ENCODE measurements at regions of chr17 and their contacts with region 1.

Region 1: DNA sequence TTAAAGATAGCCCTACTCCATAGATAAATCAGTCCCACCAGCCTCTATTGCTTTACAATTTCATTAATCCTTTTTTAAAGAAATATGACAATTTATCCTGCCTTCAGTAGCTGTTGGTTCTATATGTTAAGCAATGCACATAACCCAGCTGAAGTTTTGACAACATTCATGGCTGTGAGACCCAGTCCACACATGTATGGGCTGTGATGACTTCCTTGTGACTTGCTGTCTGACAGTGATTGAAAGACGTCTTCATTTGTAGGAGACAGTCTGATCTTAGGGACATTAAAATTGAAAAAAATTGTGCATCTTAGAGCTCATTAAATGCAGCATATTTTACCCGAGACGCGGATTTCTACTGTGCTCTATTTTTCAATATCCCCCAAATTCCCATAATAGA is 252.0 kb upstream of the ASIC2 start:
- DNase-seq: no peak
- H3K4me3 ChIP-seq: no peak overlapping the region
- CTCF ChIP-seq: no peak

Region 2: DNA sequence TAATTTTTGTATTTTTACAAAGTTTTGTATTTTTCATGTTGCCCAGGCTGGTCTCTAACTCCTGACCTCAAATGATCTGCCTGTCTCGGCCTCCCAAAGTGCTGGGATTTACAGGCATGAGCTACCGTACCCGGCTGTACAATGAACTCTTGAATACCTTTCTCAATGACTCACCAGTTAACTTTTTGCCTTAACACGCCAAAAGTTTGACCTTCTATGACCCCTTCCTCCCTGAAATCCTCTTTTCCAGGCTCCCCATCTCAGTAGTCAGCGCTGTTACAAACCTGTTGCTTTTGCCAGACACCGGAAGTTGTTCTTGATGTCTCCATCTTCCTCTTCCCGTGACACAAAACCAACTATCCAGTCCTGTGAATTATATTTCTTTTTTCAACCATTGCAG is 93.9 kb before region 1 on chr17:
- in situ Hi-C with region 1: loop called (anchors 5 kb)
- DNase-seq: no peak
- H3K4me3 ChIP-seq: no peak overlapping the region
- CTCF ChIP-seq: no peak

Measured in astrocyte of the cerebellum (primary cell).